ENCODE measurements at regions of chr3 and their contacts with region 1.

Region 1: DNA sequence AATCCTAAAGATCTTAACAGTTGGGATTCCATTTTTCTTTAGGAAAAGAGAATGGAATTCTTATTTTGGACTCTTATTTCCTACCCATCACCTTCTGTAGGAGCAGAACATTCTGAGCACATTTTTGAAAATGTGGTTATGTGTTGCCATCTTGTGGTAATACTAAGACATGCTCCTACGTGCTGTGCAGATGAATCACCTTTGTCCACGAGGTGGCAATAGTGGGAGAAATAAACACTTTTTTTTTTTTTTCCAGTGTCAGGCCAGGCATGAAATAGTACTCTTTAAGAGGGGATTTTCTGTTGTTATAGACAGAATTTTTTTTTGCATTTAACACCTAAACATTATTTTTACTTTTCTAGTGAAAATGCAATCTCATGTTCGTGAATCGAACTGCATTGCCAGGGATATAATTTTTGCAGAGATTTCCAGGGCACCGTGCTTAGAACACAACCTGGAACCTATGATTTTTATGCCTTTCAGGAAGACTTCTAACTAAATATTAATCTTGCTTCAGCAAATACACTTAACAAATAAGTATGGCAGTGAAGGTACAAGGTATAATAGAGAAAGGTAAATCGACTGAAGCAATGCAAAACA is 196.6 kb downstream of the GAP43 start:
- DNase-seq: peak; percentile 68
- ATAC-seq: peak; percentile 90
- H3K4me3 Mint-ChIP-seq: no peak overlapping the region
- H3K27ac Mint-ChIP-seq: no peak overlapping the region
- H3K4me1 Mint-ChIP-seq: no peaks in the 10 kb centered on the region
- H3K27me3 Mint-ChIP-seq: no peaks in the 10 kb centered on the region

Region 2: DNA sequence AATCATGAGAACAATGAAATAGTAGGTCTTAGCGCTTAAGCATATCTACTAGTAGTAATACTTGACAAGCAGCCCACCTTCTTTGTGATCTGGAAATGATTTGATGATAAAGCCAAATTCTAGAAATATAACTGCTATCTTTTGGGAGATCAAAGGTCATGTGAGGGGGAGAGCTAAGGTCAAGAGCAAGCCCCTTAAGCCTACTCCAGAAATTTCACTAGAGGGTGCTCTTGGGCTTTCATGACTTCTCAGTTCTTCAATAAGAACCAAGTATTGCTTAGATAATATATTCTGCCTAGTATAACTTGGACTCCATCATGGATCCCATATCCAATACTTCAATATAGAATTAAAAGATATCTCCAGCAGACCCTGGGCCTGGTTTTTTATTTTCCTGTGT is 992.4 kb before region 1 on chr3:
- CTCF ChIA-PET with region 1: interaction called, 3 read pairs
- POLR2A ChIA-PET with region 1: no interaction called
- intact Hi-C with region 1: loop called (anchors 2 to 10 kb)
- DNase-seq: peak; percentile 12
- ATAC-seq: peak; percentile 63
- H3K4me3 Mint-ChIP-seq: no peak overlapping the region
- H3K27ac Mint-ChIP-seq: no peak overlapping the region
- H3K4me1 Mint-ChIP-seq: peaks cover 5% of the 10 kb centered on the region
- H3K27me3 Mint-ChIP-seq: no peaks in the 10 kb centered on the region

Region 3: DNA sequence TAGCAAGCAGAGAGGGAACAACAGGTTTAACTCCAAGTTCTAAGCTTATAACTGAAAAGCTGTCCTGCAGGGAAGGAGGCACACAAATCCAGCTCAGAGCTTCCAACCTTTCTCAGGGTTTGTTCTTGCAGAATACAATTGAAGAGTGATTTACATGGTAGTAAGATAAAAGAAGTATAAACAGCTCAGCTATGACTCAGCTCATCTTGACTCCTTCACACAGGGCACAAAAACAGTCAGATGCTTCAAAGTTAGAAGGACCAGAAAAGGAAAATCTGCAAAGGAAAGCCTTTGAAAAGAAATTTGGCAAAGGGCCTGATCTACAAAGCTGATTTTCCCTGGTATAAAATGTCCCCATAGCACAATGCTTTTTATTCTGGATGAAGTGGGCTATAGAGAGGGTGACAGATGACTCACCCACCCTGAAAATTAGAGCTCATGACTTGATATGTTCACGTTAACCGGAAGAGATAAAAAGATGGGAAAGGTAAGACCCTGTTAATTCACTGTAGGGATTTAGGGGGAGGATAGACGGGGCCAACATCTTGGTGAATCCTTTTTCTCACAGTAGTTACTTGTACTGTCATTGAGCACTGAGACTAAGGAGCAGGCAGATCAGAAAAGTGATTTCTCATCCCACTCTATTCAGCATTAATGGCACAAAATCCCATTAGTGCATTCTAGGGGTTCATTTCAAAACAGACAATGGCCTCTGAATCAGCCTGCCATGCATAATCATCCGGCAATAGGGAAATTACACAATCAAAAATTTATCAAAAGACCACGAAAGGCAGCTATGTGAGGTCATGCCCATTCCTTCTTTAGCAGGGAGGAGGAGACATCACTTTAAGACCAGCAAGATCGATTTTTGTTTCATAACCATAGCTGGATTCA is 53.1 kb before region 1 on chr3:
- CTCF ChIA-PET with region 1: no interaction called
- POLR2A ChIA-PET with region 1: no interaction called
- intact Hi-C with region 1: no loop called
- DNase-seq: no peak
- ATAC-seq: no peak
- H3K4me3 Mint-ChIP-seq: no peak overlapping the region
- H3K27ac Mint-ChIP-seq: no peak overlapping the region
- H3K4me1 Mint-ChIP-seq: no peaks in the 10 kb centered on the region
- H3K27me3 Mint-ChIP-seq: peaks cover 6% of the 10 kb centered on the region